Adrenal gland (tissue), 19 donors: ENCODE measurements at regions of chr5 and their contacts with region 1.

Region 1: GRCh38 chr5:177113566-177114424 is 19.8 kb upstream of the NSD1 start:
- DNase-seq: peak; percentile 67 to 94 (median 80)
- H3K4me3 ChIP-seq: peak overlapping the region in 1 of 4 donors; percentile 31
- H3K27ac ChIP-seq: peak overlapping the region in 3 of 5 donors; percentile 24 to 86 (median 28)
- H3K4me1 ChIP-seq: peaks cover 0 to 21% of the 10 kb centered on the region in 2 donors
- H3K27me3 ChIP-seq: no peaks in the 10 kb centered on the region
- CTCF ChIP-seq: peak; percentile 96 to 99 (median 98)
- POLR2A ChIP-seq: no peak

Region 2: GRCh38 chr5:176902911-176903664 is 210.7 kb before region 1 on chr5:
- intact Hi-C with region 1: no loop called
- DNase-seq: peak in 1 of 7 donors; percentile 14
- H3K4me3 ChIP-seq: no peak overlapping the region
- H3K27ac ChIP-seq: no peak overlapping the region
- H3K4me1 ChIP-seq: no peaks in the 10 kb centered on the region
- H3K27me3 ChIP-seq: no peaks in the 10 kb centered on the region
- CTCF ChIP-seq: no peak
- POLR2A ChIP-seq: no peak

Region 3: GRCh38 chr5:177071666-177072385 is 42.0 kb before region 1 on chr5:
- intact Hi-C with region 1: loop called (anchors 2 kb)
- DNase-seq: peak; percentile 76 to 92 (median 84)
- H3K4me3 ChIP-seq: no peak overlapping the region
- H3K27ac ChIP-seq: peak overlapping the region in 3 of 5 donors; percentile 9 to 57 (median 47)
- H3K4me1 ChIP-seq: peaks cover 0 to 9% of the 10 kb centered on the region in 2 donors
- H3K27me3 ChIP-seq: no peaks in the 10 kb centered on the region
- CTCF ChIP-seq: peak; percentile 84 to 93 (median 86)
- POLR2A ChIP-seq: no peak